Tibial artery (tissue), 4 donors: ENCODE measurements at regions of chr2 and their contacts with region 1.

Region 1: GRCh38 chr2:27086090-27086723 is 365 bp upstream of the KHK start:
- DNase-seq: peak; percentile 93 to 97
- H3K4me3 ChIP-seq: peak overlapping the region; percentile 63 to 85
- H3K27ac ChIP-seq: peak overlapping the region; percentile 91 to 96
- H3K4me1 ChIP-seq: peaks cover 0 to 43% (median 35%) of the 10 kb centered on the region in 4 donors
- H3K27me3 ChIP-seq: no peaks in the 10 kb centered on the region
- CTCF ChIP-seq: peak; percentile 82 to 95

Region 2: GRCh38 chr2:27032495-27033252 is 53.5 kb before region 1 on chr2 and contains the start of gene TMEM214:
- intact Hi-C with region 1: loop called (anchors 5 kb)
- DNase-seq: peak; percentile 91 to 93
- H3K4me3 ChIP-seq: peak within 1 kb of the TSS; percentile 96 to 98
- H3K27ac ChIP-seq: peak within 1 kb of the TSS; percentile 91
- H3K4me1 ChIP-seq: peaks cover 0 to 22% (median 16%) of the 10 kb centered on the region in 4 donors
- H3K27me3 ChIP-seq: no peaks in the 10 kb centered on the region
- CTCF ChIP-seq: peak; percentile 6 to 24

Region 3: GRCh38 chr2:27050281-27050995 is 35.8 kb before region 1 on chr2:
- intact Hi-C with region 1: loop called (anchors 5 kb)
- DNase-seq: peak; percentile 91 to 97
- H3K4me3 ChIP-seq: peak overlapping the region; percentile 75 to 98
- H3K27ac ChIP-seq: peak overlapping the region; percentile 91 to 98
- H3K4me1 ChIP-seq: peaks cover 0 to 18% (median 12%) of the 10 kb centered on the region in 4 donors
- H3K27me3 ChIP-seq: no peaks in the 10 kb centered on the region
- CTCF ChIP-seq: peak; percentile 62 to 73